CD4-positive, alpha-beta T cell (primary cell): ENCODE measurements at regions of chr9 and their contacts with region 1.

Region 1: GRCh38 chr9:131762356-131762932 is 22.6 kb upstream of the RAPGEF1 start:
- DNase-seq: peak; percentile 62 to 88 (median 72)
- ATAC-seq: peak; percentile 97
- H3K4me3 ChIP-seq: no peak overlapping the region
- H3K4me3 Mint-ChIP-seq: no peak overlapping the region
- H3K27ac ChIP-seq: no peak overlapping the region
- H3K27ac Mint-ChIP-seq: no peak overlapping the region
- H3K4me1 ChIP-seq: peaks cover 7% of the 10 kb centered on the region
- H3K4me1 Mint-ChIP-seq: no peaks in the 10 kb centered on the region
- H3K27me3 ChIP-seq: no peaks in the 10 kb centered on the region
- H3K27me3 Mint-ChIP-seq: peaks cover 21% of the 10 kb centered on the region
- CTCF ChIP-seq: peak; percentile 97

Region 2: DNA sequence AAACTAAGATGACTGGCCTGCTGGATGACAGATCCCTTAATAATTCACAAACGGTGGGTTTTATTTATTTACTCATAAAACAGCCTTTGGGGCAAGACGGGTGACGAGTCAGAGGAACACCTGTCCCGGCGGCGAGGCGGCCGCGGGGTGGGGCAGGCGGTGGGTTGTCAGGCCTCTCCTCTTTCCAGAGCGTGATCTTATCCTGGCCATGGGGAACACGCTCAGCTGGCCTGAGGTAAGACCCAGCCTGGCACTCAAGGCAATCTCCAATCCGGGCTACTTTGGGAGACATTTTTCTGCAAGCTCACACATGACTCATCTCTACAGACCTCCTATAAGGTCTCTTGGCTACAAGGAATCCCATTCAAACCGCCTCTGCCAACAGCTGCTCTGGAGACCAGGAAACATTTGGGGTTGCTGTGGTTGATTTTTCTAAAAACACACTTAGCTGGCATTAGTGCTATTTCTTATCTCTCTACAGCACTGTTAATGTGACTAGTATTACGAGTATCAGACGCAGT is 28.8 kb before region 1 on chr9:
- CTCF ChIA-PET with region 1: no interaction called
- POLR2A ChIA-PET with region 1: no interaction called
- intact Hi-C with region 1: no loop called
- DNase-seq: peak in 7 of 14 experiments; percentile 31 to 77 (median 46)
- ATAC-seq: peak; percentile 10
- H3K4me3 ChIP-seq: peak overlapping the region; percentile 46
- H3K4me3 Mint-ChIP-seq: peak overlapping the region; percentile 83
- H3K27ac ChIP-seq: peak overlapping the region; percentile 72 to 86
- H3K27ac Mint-ChIP-seq: peak overlapping the region; percentile 86
- H3K4me1 ChIP-seq: peaks cover 99% of the 10 kb centered on the region
- H3K4me1 Mint-ChIP-seq: peaks cover 85% of the 10 kb centered on the region
- H3K27me3 ChIP-seq: no peaks in the 10 kb centered on the region
- H3K27me3 Mint-ChIP-seq: no peaks in the 10 kb centered on the region
- CTCF ChIP-seq: no peak

Region 3: DNA sequence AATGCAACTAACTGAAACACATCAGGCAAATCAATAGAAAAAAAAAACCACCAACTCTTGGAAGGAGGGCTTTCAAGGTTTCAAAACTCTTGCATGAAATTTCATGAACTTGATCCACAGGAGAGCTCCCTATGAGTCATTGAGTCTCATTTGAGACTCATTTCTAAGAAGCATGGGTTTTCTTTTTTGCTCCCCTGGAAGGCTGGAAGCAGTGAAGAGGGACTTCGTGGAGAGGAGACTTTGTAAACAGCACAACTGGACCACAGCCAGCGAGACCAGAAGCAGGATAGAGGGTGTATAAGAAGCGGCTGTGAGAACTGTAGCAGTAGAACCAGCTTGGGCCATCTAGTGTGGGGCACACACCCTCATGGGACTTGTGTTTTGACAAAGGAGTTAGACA is 18.6 kb after region 1 on chr9:
- CTCF ChIA-PET with region 1: no interaction called
- POLR2A ChIA-PET with region 1: no interaction called
- intact Hi-C with region 1: no loop called
- DNase-seq: no peak
- ATAC-seq: no peak
- H3K4me3 ChIP-seq: no peak overlapping the region
- H3K4me3 Mint-ChIP-seq: no peak overlapping the region
- H3K27ac ChIP-seq: no peak overlapping the region
- H3K27ac Mint-ChIP-seq: no peak overlapping the region
- H3K4me1 ChIP-seq: no peaks in the 10 kb centered on the region
- H3K4me1 Mint-ChIP-seq: no peaks in the 10 kb centered on the region
- H3K27me3 ChIP-seq: peaks cover 20% of the 10 kb centered on the region in 2 experiments
- H3K27me3 Mint-ChIP-seq: peaks cover 53% of the 10 kb centered on the region
- CTCF ChIP-seq: no peak

Region 4: GRCh38 chr9:132079391-132080091 is 317.1 kb after region 1 on chr9 and contains the start of gene MED27:
- CTCF ChIA-PET with region 1: no interaction called
- POLR2A ChIA-PET with region 1: no interaction called
- intact Hi-C with region 1: loop called in 1 of 2 experiments (anchors 10 kb)
- DNase-seq: peak; percentile 81 to 96 (median 92)
- ATAC-seq: peak; percentile 98
- H3K4me3 ChIP-seq: peak within 1 kb of the TSS; percentile 88
- H3K4me3 Mint-ChIP-seq: peak within 1 kb of the TSS; percentile 91
- H3K27ac ChIP-seq: peak within 1 kb of the TSS in 1 of 2 donors; percentile 11
- H3K27ac Mint-ChIP-seq: peak within 1 kb of the TSS; percentile 68
- H3K4me1 ChIP-seq: peaks cover 19% of the 10 kb centered on the region
- H3K4me1 Mint-ChIP-seq: peaks cover 47% of the 10 kb centered on the region
- H3K27me3 ChIP-seq: peaks cover 0 to 2% of the 10 kb centered on the region in 2 experiments
- H3K27me3 Mint-ChIP-seq: peaks cover 11% of the 10 kb centered on the region
- CTCF ChIP-seq: no peak
- total RNA-seq, gene MED27: 15.0 to 17.4 TPM

Region 5: GRCh38 chr9:132240753-132241493 is 478.5 kb after region 1 on chr9:
- CTCF ChIA-PET with region 1: no interaction called
- POLR2A ChIA-PET with region 1: interaction called, 8 read pairs
- intact Hi-C with region 1: loop called in 1 of 2 experiments (anchors 2 kb)
- DNase-seq: peak; percentile 99 to 100 (median 100)
- ATAC-seq: peak; percentile 86
- H3K4me3 ChIP-seq: peak overlapping the region; percentile 74
- H3K4me3 Mint-ChIP-seq: peak overlapping the region; percentile 99
- H3K27ac ChIP-seq: no peak overlapping the region
- H3K27ac Mint-ChIP-seq: peak overlapping the region; percentile 94
- H3K4me1 ChIP-seq: peaks cover 39% of the 10 kb centered on the region
- H3K4me1 Mint-ChIP-seq: peaks cover 20% of the 10 kb centered on the region
- H3K27me3 ChIP-seq: peaks cover 2 to 6% of the 10 kb centered on the region in 2 experiments
- H3K27me3 Mint-ChIP-seq: peaks cover 4% of the 10 kb centered on the region
- CTCF ChIP-seq: no peak

Region 6: GRCh38 chr9:132268725-132269352 is 506.4 kb after region 1 on chr9:
- CTCF ChIA-PET with region 1: interaction called, 13 read pairs
- POLR2A ChIA-PET with region 1: no interaction called
- intact Hi-C with region 1: loop called (anchors 1 to 5 kb)
- DNase-seq: peak; percentile 57 to 84 (median 69)
- ATAC-seq: peak; percentile 79
- H3K4me3 ChIP-seq: no peak overlapping the region
- H3K4me3 Mint-ChIP-seq: no peak overlapping the region
- H3K27ac ChIP-seq: no peak overlapping the region
- H3K27ac Mint-ChIP-seq: peak overlapping the region; percentile 28
- H3K4me1 ChIP-seq: no peaks in the 10 kb centered on the region
- H3K4me1 Mint-ChIP-seq: peaks cover 5% of the 10 kb centered on the region
- H3K27me3 ChIP-seq: no peaks in the 10 kb centered on the region
- H3K27me3 Mint-ChIP-seq: no peaks in the 10 kb centered on the region
- CTCF ChIP-seq: peak; percentile 98